Aorta (tissue), 5 donors: ENCODE measurements at regions of chr21 and their contacts with region 1.

Region 1: DNA sequence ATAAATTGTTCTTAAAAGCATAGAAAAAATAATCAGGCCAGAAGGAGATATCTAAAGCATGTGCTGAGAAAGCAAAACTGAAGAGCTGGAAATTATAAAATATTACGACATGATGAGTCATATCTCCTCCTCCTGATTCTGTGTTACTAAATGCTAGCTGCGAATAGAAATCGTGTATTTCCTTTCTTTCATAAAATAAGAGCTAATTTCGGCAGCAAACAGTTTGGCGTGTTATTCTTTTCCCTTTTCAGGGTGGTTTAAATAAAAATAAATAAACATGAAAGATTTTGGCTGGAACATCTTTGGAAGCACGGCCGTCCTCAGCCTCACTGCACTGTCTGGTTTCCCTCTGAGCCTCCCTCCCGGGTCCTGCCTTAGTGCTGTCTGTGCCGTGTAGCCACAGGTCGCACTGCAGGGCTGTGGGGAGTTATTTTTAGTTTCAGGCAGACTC is 56.0 kb downstream of the ADARB1 start:
- DNase-seq: no peak
- ATAC-seq: peak; percentile 75
- H3K4me3 ChIP-seq: no peak overlapping the region
- H3K27ac ChIP-seq: peak overlapping the region; percentile 23 to 86
- H3K4me1 ChIP-seq: no peaks in the 10 kb centered on the region
- H3K27me3 ChIP-seq: no peaks in the 10 kb centered on the region

Region 2: DNA sequence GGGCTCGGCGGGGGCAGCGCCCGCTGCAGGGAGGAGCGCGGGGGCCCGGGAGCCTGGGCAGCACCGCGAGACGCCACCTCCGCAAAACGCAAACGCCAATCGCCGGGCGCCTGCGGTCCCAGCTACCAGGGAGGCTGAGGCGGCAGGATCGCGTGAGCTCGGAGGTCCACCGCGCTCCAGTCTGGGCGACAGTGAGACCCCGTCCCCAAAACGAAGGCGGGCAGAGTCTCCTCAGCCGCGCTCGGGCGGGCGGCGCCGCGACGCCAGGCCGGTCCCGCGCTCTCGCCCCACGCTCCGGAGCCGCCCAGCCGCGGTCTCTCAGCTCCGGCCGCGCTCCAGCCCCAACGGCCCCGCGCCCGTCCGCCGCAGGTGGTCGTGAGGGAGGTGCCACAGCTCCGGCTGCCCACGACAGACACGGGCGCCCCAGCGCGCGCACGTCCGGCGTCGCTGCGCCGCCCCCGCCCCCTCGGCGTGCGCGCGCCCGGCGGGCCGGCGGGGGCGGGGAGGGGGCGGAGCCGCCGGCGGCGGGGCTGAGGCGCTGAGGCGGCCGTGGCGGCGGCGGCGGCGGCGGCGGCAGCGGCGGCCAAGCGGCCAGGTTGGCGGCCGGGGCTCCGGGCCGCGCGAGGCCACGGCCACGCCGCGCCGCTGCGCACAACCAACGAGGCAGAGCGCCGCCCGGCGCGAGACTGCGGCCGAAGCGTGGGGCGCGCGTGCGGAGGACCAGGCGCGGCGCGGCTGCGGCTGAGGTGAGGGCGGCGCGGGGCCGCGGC is 56.1 kb before region 1 on chr21 and contains the start of gene ADARB1:
- intact Hi-C with region 1: loop called (anchors 5 kb)
- DNase-seq: peak; percentile 76 to 88
- ATAC-seq: peak; percentile 76
- H3K4me3 ChIP-seq: peak within 1 kb of the TSS; percentile 59 to 88
- H3K27ac ChIP-seq: peak within 1 kb of the TSS; percentile 78 to 95
- H3K4me1 ChIP-seq: peaks cover 0 to 1% of the 10 kb centered on the region in 2 donors
- H3K27me3 ChIP-seq: no peaks in the 10 kb centered on the region
- total RNA-seq, gene ADARB1: 87.9 to 224 TPM